ENCODE measurements at regions of chr17 and their contacts with region 1.

Region 1: GRCh38 chr17:82297714-82298537 is 19.5 kb downstream of the CD7 start:
- DNase-seq: peak; percentile 97
- H3K4me3 Mint-ChIP-seq: peak overlapping the region; percentile 93
- H3K27ac Mint-ChIP-seq: peak overlapping the region; percentile 100
- H3K4me1 Mint-ChIP-seq: peaks cover 76% of the 10 kb centered on the region
- H3K27me3 Mint-ChIP-seq: no peaks in the 10 kb centered on the region

Region 2: DNA sequence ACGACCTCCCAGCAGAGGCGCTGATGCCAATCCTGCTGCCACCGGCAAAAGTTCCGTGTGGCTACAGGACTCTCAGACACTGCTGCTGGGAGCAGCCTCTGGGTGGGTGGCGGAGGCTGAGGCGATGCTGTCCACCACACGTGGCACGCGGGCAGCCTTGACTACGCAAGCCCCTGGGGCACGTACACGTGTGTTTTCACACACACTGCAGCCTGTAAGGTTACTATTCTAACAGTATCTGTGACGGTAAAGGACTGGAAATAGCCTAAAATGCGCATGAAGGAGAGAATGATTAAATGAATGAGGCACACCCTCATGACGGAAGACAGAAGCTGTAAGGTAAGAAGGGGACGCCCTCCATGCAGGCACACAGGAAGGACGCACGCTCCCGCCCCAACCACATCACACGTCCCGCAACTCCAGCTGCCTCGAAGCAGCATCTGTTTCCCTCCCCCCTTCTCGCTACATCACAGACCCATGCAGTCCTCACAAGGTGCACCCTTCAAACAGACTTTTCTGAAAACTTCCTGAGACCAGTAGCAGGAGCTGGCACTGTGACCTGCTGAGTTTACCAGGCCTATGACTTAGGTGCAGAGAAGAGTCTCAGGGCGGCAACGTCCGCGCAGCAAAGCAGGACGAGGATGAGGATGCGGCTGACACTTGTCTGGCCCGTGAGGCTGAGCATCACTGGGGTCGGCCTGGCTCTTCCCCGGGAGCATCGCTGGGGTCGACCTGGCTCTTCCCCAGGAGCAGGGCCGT is 171.2 kb before region 1 on chr17:
- CTCF ChIA-PET with region 1: no interaction called
- intact Hi-C with region 1: loop called (anchors 2 kb)
- DNase-seq: peak; percentile 95
- H3K4me3 Mint-ChIP-seq: peak overlapping the region; percentile 71
- H3K27ac Mint-ChIP-seq: peak overlapping the region; percentile 95
- H3K4me1 Mint-ChIP-seq: peaks cover 65% of the 10 kb centered on the region
- H3K27me3 Mint-ChIP-seq: no peaks in the 10 kb centered on the region

Region 3: DNA sequence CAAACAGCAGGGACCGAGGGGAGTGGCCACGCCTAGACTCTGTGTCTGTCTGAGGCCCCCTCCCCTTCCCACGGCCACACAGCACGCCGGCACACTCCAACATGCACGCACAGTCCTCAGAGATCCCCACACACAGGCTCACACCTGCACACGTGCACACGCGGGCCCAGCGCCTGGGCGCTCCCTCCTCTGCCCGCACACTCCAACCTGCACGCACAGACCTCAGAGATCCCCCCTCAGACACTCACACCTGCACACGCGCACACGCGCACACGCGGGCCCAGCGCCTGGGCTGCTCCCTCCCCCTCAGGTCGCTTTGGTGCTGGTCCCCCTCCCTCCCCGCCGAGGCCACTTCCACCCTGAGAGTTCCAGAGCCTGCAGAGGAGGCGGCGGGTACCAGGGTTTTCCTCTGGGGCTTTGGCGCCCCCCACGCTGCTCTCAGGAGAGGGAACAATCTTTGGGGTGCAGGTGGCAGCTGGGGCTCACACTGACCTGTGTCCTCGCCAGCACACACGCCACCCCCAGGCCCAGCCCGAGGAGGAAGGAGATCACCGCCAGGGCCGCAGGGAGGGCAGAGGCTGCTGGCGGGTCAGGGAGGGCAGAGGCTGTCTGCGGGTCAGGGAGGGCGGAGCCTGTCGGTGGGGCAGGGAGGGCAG is 17.9 kb after region 1 on chr17:
- CTCF ChIA-PET with region 1: interaction called, 60 read pairs
- intact Hi-C with region 1: loop called (anchors 1 kb)
- DNase-seq: peak; percentile 66
- H3K4me3 Mint-ChIP-seq: no peak overlapping the region
- H3K27ac Mint-ChIP-seq: no peak overlapping the region
- H3K4me1 Mint-ChIP-seq: peaks cover 18% of the 10 kb centered on the region
- H3K27me3 Mint-ChIP-seq: no peaks in the 10 kb centered on the region

Region 4: GRCh38 chr17:82351716-82352488 is 54.0 kb after region 1 on chr17:
- CTCF ChIA-PET with region 1: interaction called, 13 read pairs
- intact Hi-C with region 1: loop called (anchors 1 kb)
- DNase-seq: peak; percentile 89
- H3K4me3 Mint-ChIP-seq: no peak overlapping the region
- H3K27ac Mint-ChIP-seq: no peak overlapping the region
- H3K4me1 Mint-ChIP-seq: no peaks in the 10 kb centered on the region
- H3K27me3 Mint-ChIP-seq: no peaks in the 10 kb centered on the region

Region 5: GRCh38 chr17:82457997-82458864 is 160.3 kb after region 1 on chr17 and contains the start of gene NARF:
- CTCF ChIA-PET with region 1: no interaction called
- intact Hi-C with region 1: loop called (anchors 2 kb)
- DNase-seq: peak; percentile 97
- H3K4me3 Mint-ChIP-seq: peak within 1 kb of the TSS; percentile 78
- H3K27ac Mint-ChIP-seq: peak within 1 kb of the TSS; percentile 97
- H3K4me1 Mint-ChIP-seq: peaks cover 27% of the 10 kb centered on the region
- H3K27me3 Mint-ChIP-seq: no peaks in the 10 kb centered on the region
- total RNA-seq, gene NARF: 64.2 to 69.3 TPM

Region 6: GRCh38 chr17:82751571-82752370 is 453.8 kb after region 1 on chr17 and contains the start of gene TBCD:
- CTCF ChIA-PET with region 1: no interaction called
- intact Hi-C with region 1: loop called (anchors 5 kb)
- DNase-seq: peak; percentile 90
- H3K4me3 Mint-ChIP-seq: peak within 1 kb of the TSS; percentile 79
- H3K27ac Mint-ChIP-seq: peak within 1 kb of the TSS; percentile 18
- H3K4me1 Mint-ChIP-seq: peaks cover 26% of the 10 kb centered on the region
- H3K27me3 Mint-ChIP-seq: no peaks in the 10 kb centered on the region
- total RNA-seq, gene TBCD: 71.8 to 75.3 TPM